Left cardiac atrium (tissue), 4 donors: ENCODE measurements at regions of chr1 and their contacts with region 1.

Region 1: GRCh38 chr1:12464598-12465056 is 153.4 kb downstream of the DHRS3 start:
- DNase-seq: peak; percentile 53
- ATAC-seq: peak; percentile 10 to 71

Region 2: DNA sequence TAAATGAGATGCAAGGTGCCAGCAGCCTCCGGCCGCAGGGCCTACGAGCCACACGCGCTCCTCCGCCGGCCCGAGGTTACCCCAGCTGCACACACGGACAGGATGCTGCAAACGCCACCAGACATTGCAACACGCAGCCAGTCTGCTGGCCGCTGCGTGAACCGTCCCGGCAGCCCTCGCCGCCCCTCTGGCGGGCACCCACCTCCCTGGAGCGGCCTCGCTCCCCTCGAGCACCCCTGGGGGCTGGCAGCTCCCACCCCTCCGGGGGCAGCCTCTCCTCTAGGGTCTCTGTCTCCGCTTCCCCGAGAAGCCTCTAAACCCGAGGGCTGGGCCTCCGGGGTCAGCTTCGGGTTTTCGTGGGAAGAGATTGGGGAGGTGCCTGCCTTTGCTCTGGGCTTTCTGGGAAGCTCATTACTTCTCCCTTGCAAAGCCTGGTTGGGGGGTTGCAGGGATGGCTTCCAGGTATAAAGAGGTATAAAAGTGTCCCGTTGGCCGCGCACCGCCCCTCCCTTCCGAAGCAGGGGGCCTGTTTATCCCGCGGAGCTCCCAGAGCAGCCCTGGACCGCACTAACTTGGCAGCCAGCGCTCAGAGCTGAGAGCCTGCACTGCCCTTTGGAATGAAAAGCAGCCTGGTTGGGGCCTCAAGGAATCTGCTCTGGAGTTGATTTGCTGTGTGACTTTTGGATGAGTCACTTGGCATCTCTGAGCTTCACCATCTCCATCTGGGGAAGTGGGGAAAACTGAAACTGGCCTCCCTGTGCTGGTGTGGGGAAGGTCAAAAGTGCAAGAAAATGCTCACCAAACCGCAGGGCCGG is 131.6 kb after region 1 on chr1:
- intact Hi-C with region 1: loop called in 1 of 2 experiments (anchors 5 kb)
- DNase-seq: peak; percentile 94
- ATAC-seq: peak; percentile 77 to 86